Gastrocnemius medialis (tissue), 4 donors: ENCODE measurements at regions of chr22 and their contacts with region 1.

Region 1: GRCh38 chr22:41966607-41967240 is 2.5 kb upstream of the SEPTIN3 start:
- DNase-seq: no peak
- ATAC-seq: no peak
- H3K4me3 ChIP-seq: no peak overlapping the region
- H3K27ac ChIP-seq: no peak overlapping the region
- H3K4me1 ChIP-seq: no peaks in the 10 kb centered on the region
- H3K27me3 ChIP-seq: no peaks in the 10 kb centered on the region
- CTCF ChIP-seq: peak in 4 of 5 experiments; percentile 14 to 26 (median 18)
- POLR2A ChIP-seq: no peak

Region 2: GRCh38 chr22:42114721-42115120 is 148.0 kb after region 1 on chr22:
- in situ Hi-C with region 1: no loop called
- intact Hi-C with region 1: loop called (anchors 10 kb)
- DNase-seq: no peak
- ATAC-seq: no peak
- H3K4me3 ChIP-seq: no peak overlapping the region
- H3K27ac ChIP-seq: no peak overlapping the region
- H3K4me1 ChIP-seq: peaks cover 6 to 8% of the 10 kb centered on the region in 2 donors
- H3K27me3 ChIP-seq: no peaks in the 10 kb centered on the region
- CTCF ChIP-seq: peak in 1 of 5 experiments; percentile 38
- POLR2A ChIP-seq: no peak

Region 3: GRCh38 chr22:42437488-42438292 is 471.0 kb after region 1 on chr22:
- in situ Hi-C with region 1: loop called in 3 of 4 experiments (anchors 10 to 25 kb)
- intact Hi-C with region 1: no loop called
- DNase-seq: peak; percentile 40 to 54
- ATAC-seq: peak; percentile 78 to 91
- H3K4me3 ChIP-seq: peak overlapping the region; percentile 21 to 53 (median 38)
- H3K27ac ChIP-seq: no peak overlapping the region
- H3K4me1 ChIP-seq: peaks cover 6 to 7% of the 10 kb centered on the region in 2 donors
- H3K27me3 ChIP-seq: peaks cover 15 to 22% (median 16%) of the 10 kb centered on the region in 3 donors
- CTCF ChIP-seq: peak; percentile 92 to 97 (median 95)
- POLR2A ChIP-seq: no peak